ENCODE measurements at regions of chr19 and their contacts with region 1.

Region 1: DNA sequence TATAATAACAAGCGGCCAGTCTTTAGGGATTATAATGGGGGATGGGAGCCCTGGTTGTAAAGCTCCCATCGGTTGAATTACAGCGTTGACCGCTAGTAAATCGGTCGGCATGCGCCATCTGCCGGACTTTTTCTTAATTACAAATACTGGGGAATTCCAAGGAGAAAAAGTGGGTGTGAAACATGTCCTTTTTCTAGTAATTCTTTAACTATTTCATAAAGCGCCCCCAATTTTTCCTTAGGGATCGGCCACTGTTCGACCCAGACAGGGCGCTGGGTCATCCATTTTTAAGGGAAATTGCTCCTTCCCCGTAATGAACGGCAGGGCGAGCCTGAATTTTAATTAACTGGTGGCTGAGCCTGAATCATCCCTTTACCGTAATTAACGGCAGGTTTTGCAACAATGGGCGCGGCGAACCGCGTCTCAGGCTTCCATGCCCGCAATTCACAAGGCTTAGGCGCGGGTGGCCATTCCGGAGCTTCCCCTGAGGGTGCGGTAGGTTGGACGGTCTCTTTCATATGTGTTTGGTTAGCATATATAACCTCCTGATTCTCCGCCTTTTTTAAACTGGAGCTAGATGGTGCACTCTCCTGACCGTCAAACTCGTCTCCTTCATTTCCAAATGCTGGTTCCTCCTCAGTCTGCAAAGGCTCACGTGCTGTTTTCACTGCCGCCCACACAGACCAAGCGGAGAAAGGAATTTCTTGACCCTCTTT is 30.2 kb upstream of the EVI5L start:
- DNase-seq: peak; percentile 84 to 89
- H3K4me3 ChIP-seq: peak overlapping the region; percentile 10; the same call in 1 of the 2 replicates
- H3K4me1 ChIP-seq: peaks cover 16% of the 10 kb centered on the region
- H3K27me3 ChIP-seq: peaks cover 3% of the 10 kb centered on the region; the same call in 1 of the 2 replicates

Region 2: GRCh38 chr19:7104747-7105447 is 694.9 kb before region 1 on chr19:
- in situ Hi-C with region 1: loop called (anchors 25 kb)
- DNase-seq: no peak
- H3K4me3 ChIP-seq: no peak overlapping the region
- H3K4me1 ChIP-seq: peaks cover under 1% of the 10 kb centered on the region; the same call in 1 of the 2 replicates
- H3K27me3 ChIP-seq: no peaks in the 10 kb centered on the region

Region 3: GRCh38 chr19:7349961-7350711 is 449.7 kb before region 1 on chr19:
- in situ Hi-C with region 1: loop called (anchors 10 kb)
- DNase-seq: no peak
- H3K4me3 ChIP-seq: no peak overlapping the region
- H3K4me1 ChIP-seq: no peaks in the 10 kb centered on the region
- H3K27me3 ChIP-seq: peaks cover 5% of the 10 kb centered on the region; the same call in 1 of the 2 replicates

Region 4: DNA sequence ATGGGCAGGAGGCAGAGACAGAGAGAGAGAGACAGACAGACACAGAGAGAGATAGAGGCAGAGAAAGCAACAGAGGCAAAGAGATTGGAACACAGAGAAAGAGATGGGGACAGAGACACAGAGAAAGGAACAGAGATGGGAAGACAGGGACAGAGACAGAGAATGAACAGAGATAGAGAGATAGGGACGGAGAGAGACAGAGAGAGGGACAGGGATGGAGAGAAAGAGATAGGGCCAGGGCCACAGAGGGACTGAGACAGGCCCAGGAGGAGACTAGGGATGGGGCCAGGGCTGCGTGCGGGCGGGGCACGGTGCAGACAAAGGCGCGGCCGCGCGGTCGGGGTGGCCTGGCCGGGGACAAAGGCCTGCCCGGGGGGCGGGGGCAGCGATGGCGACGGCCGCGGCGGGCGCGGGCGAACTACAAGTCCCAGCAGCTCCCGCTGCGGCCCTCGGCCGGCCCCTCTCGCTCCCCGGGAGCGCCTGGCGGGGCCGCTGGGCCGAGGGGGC is 284.1 kb before region 1 on chr19 and contains the start of gene ZNF358:
- in situ Hi-C with region 1: no loop called
- DNase-seq: peak; percentile 78 to 92
- H3K4me3 ChIP-seq: peak within 1 kb of the TSS; percentile 50
- H3K4me1 ChIP-seq: peaks cover 4% of the 10 kb centered on the region
- H3K27me3 ChIP-seq: no peaks in the 10 kb centered on the region

Region 5: DNA sequence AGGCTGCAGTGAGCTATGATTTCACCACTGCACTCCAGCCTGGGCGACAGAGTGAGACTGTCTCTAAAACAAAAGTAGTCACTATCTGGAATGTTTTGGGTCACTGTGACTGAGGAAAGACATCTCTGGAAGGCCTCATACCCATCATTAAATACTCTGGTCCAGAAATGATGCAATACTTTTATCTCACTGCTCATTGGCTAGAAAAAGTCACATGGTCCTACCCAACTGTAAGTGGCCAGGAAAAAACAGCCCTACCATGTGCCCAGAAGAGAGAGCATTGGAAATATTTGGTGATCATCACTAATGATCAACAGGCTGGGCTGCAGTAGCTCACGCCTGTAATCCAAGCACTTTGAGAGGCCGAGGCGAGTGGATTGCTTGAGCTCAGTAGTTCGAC is 234.5 kb before region 1 on chr19:
- in situ Hi-C with region 1: loop called (anchors 5 kb)
- DNase-seq: no peak
- H3K4me3 ChIP-seq: no peak overlapping the region
- H3K4me1 ChIP-seq: no peaks in the 10 kb centered on the region
- H3K27me3 ChIP-seq: no peaks in the 10 kb centered on the region

Region 6: DNA sequence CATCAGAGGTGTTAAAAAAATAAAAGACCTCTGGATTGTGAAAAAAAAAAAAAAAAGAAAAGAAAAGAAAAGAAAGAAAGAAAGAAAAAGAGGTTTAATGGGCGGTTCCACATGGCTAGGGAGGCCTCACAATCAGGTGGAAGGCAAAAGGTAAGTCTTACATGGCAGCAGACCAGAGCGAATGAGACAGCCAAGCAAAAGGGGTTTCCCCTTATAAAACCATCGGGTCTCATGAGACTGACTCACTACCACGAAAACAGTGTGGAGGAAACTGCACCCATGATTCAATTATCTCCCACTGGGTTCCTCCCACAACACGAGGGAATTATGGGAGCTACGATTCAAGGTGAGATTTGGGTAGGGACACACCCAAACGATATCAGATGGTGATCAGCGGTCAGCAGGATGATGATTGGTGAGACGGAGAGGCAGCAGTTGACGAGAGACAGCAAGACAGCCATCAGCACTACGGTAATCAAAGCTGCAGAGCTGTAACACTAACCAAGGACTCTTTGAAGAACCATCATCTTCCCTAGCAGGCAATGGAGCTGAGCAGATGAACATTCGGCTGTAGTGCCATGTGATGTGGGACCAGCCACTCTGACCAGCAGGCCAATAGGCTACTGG is 48.5 kb before region 1 on chr19:
- in situ Hi-C with region 1: no loop called
- DNase-seq: no peak
- H3K4me3 ChIP-seq: no peak overlapping the region
- H3K4me1 ChIP-seq: no peaks in the 10 kb centered on the region
- H3K27me3 ChIP-seq: 0 out of 2 replicates have a peak, but pooled peaks cover 3% of the 10 kb centered on the region